Sciatic nerve (tissue), 2 donors: ENCODE measurements at regions of chr10 and their contacts with region 1.

Region 1: GRCh38 chr10:132347211-132347930 is 15.4 kb downstream of the LRRC27 start:
- DNase-seq: no peak
- ATAC-seq: no peak

Region 2: DNA sequence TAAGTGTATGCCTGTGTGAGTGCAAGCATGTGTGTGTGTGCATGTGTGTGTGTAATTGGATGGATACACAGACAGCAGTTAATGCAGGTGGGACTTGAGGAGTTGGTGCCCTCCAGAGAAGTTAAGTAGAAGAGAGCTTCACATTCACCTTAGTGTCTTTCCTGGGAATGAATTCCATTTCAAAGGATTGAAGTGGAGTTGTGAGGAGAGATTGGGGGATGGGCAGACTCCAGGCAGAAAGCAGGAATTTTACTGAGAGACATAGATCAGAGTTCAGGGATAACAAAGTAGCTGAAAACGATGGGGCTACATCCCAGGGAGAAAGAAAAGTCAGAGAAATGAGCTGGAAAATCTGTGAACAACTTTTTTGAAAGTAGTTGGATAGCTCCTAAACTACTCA is 1500.2 kb before region 1 on chr10:
- intact Hi-C with region 1: loop called (anchors 5 kb)
- DNase-seq: no peak
- ATAC-seq: no peak